ENCODE measurements at regions of chr10 and their contacts with region 1.

Region 1: GRCh38 chr10:14995964-14996565 is 36.9 kb downstream of the MEIG1 start:
- DNase-seq: no peak
- H3K4me3 ChIP-seq: no peak overlapping the region
- H3K27ac ChIP-seq: no peak overlapping the region
- H3K4me1 ChIP-seq: no peaks in the 10 kb centered on the region
- H3K27me3 ChIP-seq: no peaks in the 10 kb centered on the region
- CTCF ChIP-seq: no peak

Region 2: DNA sequence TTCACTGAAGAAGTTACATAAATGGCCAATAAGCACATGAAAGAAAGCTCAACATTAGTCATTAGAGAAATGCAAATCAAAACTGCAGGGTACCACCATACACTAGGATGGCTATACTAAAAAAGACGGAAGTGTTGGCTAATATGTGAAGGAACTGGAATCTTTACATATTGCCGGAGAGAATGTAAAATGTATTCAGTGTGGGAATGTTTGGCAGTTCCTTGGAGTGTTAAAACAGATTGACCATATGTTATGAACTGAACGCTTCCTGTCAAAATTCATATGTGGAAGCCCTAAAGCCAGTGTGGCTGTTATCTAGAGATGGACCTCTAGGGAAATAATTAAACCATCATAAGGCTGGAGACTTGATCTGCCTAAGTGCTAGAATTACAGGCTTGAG is 84.3 kb before region 1 on chr10:
- CTCF ChIA-PET with region 1: no interaction called
- dilution Hi-C with region 1: no loop called
- in situ Hi-C with region 1: no loop called
- intact Hi-C with region 1: no loop called
- DNase-seq: no peak
- H3K4me3 ChIP-seq: no peak overlapping the region
- H3K27ac ChIP-seq: no peak overlapping the region
- H3K4me1 ChIP-seq: no peaks in the 10 kb centered on the region
- H3K27me3 ChIP-seq: no peaks in the 10 kb centered on the region
- CTCF ChIP-seq: no peak

Region 3: GRCh38 chr10:15015451-15015850 is 19.4 kb after region 1 on chr10:
- CTCF ChIA-PET with region 1: no interaction called
- dilution Hi-C with region 1: no loop called
- in situ Hi-C with region 1: no loop called
- intact Hi-C with region 1: loop called (anchors 2 kb)
- DNase-seq: no peak
- H3K4me3 ChIP-seq: no peak overlapping the region
- H3K27ac ChIP-seq: no peak overlapping the region
- H3K4me1 ChIP-seq: peaks cover 17% of the 10 kb centered on the region
- H3K27me3 ChIP-seq: no peaks in the 10 kb centered on the region
- CTCF ChIP-seq: no peak